ENCODE measurements at regions of chr5 and their contacts with region 1.

Region 1: GRCh38 chr5:115579747-115580173 is 22.5 kb downstream of the TICAM2 start:
- DNase-seq: no peak
- ATAC-seq: no peak
- H3K4me3 Mint-ChIP-seq: no peak overlapping the region
- H3K27ac Mint-ChIP-seq: no peak overlapping the region
- H3K4me1 Mint-ChIP-seq: no peaks in the 10 kb centered on the region
- H3K27me3 Mint-ChIP-seq: no peaks in the 10 kb centered on the region
- CTCF ChIP-seq: no peak

Region 2: GRCh38 chr5:115377468-115378217 is 202.1 kb before region 1 on chr5:
- CTCF ChIA-PET with region 1: interaction called, 11 read pairs
- POLR2A ChIA-PET with region 1: no interaction called
- intact Hi-C with region 1: loop called (anchors 10 kb)
- DNase-seq: no peak
- ATAC-seq: peak; percentile 72
- H3K4me3 Mint-ChIP-seq: no peak overlapping the region
- H3K27ac Mint-ChIP-seq: no peak overlapping the region
- H3K4me1 Mint-ChIP-seq: peaks cover 9% of the 10 kb centered on the region
- H3K27me3 Mint-ChIP-seq: peaks cover 5% of the 10 kb centered on the region
- CTCF ChIP-seq: no peak

Region 3: DNA sequence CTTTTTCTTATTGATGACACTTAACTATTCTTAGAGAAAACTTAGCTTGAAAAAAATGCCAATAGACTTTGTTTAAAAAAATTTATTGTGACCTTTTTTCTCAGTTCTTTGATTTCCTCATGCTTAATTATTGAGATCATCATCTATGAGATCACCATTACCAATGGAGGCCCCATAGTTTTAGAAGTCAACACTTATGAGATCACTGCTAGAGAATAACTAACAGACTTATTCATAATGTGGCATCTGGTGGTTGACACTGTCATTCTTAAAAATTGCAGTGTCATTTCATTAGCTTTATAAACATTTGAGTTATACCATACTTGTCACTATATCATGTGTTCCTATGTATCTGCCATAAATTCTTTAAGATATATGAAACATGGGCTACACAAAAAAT is 20.2 kb before region 1 on chr5:
- CTCF ChIA-PET with region 1: interaction called, 10 read pairs
- POLR2A ChIA-PET with region 1: interaction called, 3 read pairs
- intact Hi-C with region 1: no loop called
- DNase-seq: no peak
- ATAC-seq: no peak
- H3K4me3 Mint-ChIP-seq: no peak overlapping the region
- H3K27ac Mint-ChIP-seq: no peak overlapping the region
- H3K4me1 Mint-ChIP-seq: no peaks in the 10 kb centered on the region
- H3K27me3 Mint-ChIP-seq: peaks cover 10% of the 10 kb centered on the region
- CTCF ChIP-seq: no peak

Region 4: DNA sequence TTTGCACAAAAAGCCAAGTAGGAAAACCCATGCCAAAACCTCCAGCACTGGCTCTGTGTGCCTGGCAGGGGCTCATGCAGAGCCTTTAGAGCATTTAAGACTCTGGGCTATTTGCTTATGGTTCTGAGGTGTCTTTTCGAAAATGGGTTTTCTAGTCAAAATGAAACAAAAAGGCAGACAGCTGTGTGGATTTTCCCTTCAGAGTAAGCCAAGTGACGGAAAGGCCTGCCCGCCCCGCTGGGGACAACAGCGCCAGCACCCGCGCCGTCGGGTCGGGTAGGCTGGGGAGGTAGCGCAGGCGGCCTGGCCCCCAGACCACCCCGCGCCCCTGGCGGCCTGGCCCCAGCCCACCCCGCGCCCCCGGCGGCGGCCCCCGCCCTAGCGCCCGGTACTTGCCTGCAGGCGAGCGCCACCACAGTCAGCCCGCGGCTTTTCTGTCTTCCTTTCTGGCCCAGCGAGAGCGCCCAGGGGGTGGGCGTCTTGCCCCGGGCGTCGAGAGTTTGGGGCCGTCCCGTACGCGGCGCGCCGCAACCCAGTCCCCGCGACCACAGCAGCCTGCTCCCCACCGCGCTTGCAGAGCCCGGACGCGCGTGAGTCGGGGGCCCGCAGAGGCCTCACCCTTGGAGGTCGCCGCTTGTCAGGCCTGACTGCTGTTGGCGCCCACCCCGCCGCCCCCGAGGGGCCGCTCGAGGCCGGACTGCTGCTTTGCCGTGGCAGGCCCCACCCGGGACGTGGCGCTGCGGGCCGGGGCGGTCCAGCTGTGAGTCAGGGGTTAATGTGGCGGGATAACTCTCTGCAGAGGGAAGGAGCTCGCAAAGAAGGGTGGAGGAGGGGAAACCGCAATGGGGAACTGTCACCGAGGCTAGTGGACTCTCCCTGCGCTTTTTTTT is 22.2 kb after region 1 on chr5 and contains the start of gene TICAM2:
- CTCF ChIA-PET with region 1: no interaction called
- POLR2A ChIA-PET with region 1: no interaction called
- intact Hi-C with region 1: no loop called
- DNase-seq: peak; percentile 78
- ATAC-seq: peak; percentile 87
- H3K4me3 Mint-ChIP-seq: peak within 1 kb of the TSS; percentile 41
- H3K27ac Mint-ChIP-seq: peak within 1 kb of the TSS; percentile 39
- H3K4me1 Mint-ChIP-seq: peaks cover 39% of the 10 kb centered on the region
- H3K27me3 Mint-ChIP-seq: no peaks in the 10 kb centered on the region
- CTCF ChIP-seq: no peak
- total RNA-seq, gene TICAM2: 0.27 to 0.96 TPM